Activated CD4-positive, alpha-beta memory T cell treated with anti-CD3 and anti-CD28 coated beads for 36 hours (primary cell): ENCODE measurements at regions of chr5 and their contacts with region 1.

Region 1: GRCh38 chr5:140557136-140557805 is at the start of gene SRA1:
- DNase-seq: peak; percentile 93
- H3K4me3 Mint-ChIP-seq: peak within 1 kb of the TSS; percentile 86
- H3K27ac Mint-ChIP-seq: peak within 1 kb of the TSS; percentile 90
- H3K4me1 Mint-ChIP-seq: peaks cover 45% of the 10 kb centered on the region
- H3K27me3 Mint-ChIP-seq: no peaks in the 10 kb centered on the region
- total RNA-seq, gene SRA1: 46.0 to 46.7 TPM

Region 2: GRCh38 chr5:140107312-140108083 is 449.8 kb before region 1 on chr5:
- CTCF ChIA-PET with region 1: no interaction called
- POLR2A ChIA-PET with region 1: no interaction called
- intact Hi-C with region 1: loop called (anchors 10 kb)
- DNase-seq: peak; percentile 95
- H3K4me3 Mint-ChIP-seq: peak overlapping the region; percentile 98
- H3K27ac Mint-ChIP-seq: peak overlapping the region; percentile 94
- H3K4me1 Mint-ChIP-seq: peaks cover 43% of the 10 kb centered on the region
- H3K27me3 Mint-ChIP-seq: no peaks in the 10 kb centered on the region

Region 3: GRCh38 chr5:140362860-140363630 is 194.2 kb before region 1 on chr5:
- CTCF ChIA-PET with region 1: no interaction called
- POLR2A ChIA-PET with region 1: no interaction called
- intact Hi-C with region 1: loop called (anchors 5 kb)
- DNase-seq: peak; percentile 91
- H3K4me3 Mint-ChIP-seq: peak overlapping the region; percentile 72
- H3K27ac Mint-ChIP-seq: peak overlapping the region; percentile 52
- H3K4me1 Mint-ChIP-seq: peaks cover 4% of the 10 kb centered on the region
- H3K27me3 Mint-ChIP-seq: peaks cover 3% of the 10 kb centered on the region

Region 4: DNA sequence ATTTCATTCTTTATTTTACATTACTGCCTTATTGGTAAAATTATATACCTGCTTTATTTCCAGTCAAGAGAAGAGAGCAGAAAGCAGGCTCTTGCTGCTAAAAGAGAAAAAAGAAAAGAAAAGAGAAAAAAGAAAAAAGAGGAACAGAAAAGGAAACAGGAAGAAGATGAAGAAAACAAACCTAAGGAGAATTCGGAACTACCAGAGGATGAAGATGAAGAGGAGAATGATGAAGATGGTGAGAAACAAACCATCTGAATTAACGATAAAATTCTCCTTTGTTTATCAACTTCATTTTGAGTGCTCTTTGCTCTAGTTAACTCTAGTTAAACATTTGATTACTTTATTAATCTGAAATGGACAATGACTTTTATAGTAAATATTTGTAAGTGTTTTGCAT is 33.3 kb before region 1 on chr5:
- CTCF ChIA-PET with region 1: no interaction called
- POLR2A ChIA-PET with region 1: no interaction called
- intact Hi-C with region 1: no loop called
- DNase-seq: no peak
- H3K4me3 Mint-ChIP-seq: no peak overlapping the region
- H3K27ac Mint-ChIP-seq: no peak overlapping the region
- H3K4me1 Mint-ChIP-seq: no peaks in the 10 kb centered on the region
- H3K27me3 Mint-ChIP-seq: no peaks in the 10 kb centered on the region